Activated CD8-positive, alpha-beta T cell treated with anti-CD3 and anti-CD28 coated beads for 36 hours (primary cell): ENCODE measurements at regions of chr20 and their contacts with region 1.

Region 1: GRCh38 chr20:5788385-5788895 is 38.2 kb downstream of the SHLD1 start:
- DNase-seq: peak; percentile 88
- ATAC-seq: peak; percentile 98
- H3K4me3 Mint-ChIP-seq: no peak overlapping the region
- H3K27ac Mint-ChIP-seq: no peak overlapping the region
- H3K4me1 Mint-ChIP-seq: peaks cover 2% of the 10 kb centered on the region
- H3K27me3 Mint-ChIP-seq: no peaks in the 10 kb centered on the region
- CTCF ChIP-seq: peak; percentile 96

Region 2: GRCh38 chr20:5550733-5551529 is 237.5 kb before region 1 on chr20:
- CTCF ChIA-PET with region 1: interaction called, 71 read pairs
- POLR2A ChIA-PET with region 1: interaction called, 3 read pairs
- intact Hi-C with region 1: no loop called
- DNase-seq: no peak
- ATAC-seq: no peak
- H3K4me3 Mint-ChIP-seq: no peak overlapping the region
- H3K27ac Mint-ChIP-seq: peak overlapping the region; percentile 21
- H3K4me1 Mint-ChIP-seq: peaks cover 17% of the 10 kb centered on the region
- H3K27me3 Mint-ChIP-seq: no peaks in the 10 kb centered on the region
- CTCF ChIP-seq: no peak

Region 3: GRCh38 chr20:5557123-5557522 is 231.3 kb before region 1 on chr20:
- CTCF ChIA-PET with region 1: interaction called, 71 read pairs
- POLR2A ChIA-PET with region 1: no interaction called
- intact Hi-C with region 1: no loop called
- DNase-seq: peak; percentile 79
- ATAC-seq: peak; percentile 79
- H3K4me3 Mint-ChIP-seq: no peak overlapping the region
- H3K27ac Mint-ChIP-seq: peak overlapping the region; percentile 18
- H3K4me1 Mint-ChIP-seq: no peaks in the 10 kb centered on the region
- H3K27me3 Mint-ChIP-seq: no peaks in the 10 kb centered on the region
- CTCF ChIP-seq: peak; percentile 73

Region 4: DNA sequence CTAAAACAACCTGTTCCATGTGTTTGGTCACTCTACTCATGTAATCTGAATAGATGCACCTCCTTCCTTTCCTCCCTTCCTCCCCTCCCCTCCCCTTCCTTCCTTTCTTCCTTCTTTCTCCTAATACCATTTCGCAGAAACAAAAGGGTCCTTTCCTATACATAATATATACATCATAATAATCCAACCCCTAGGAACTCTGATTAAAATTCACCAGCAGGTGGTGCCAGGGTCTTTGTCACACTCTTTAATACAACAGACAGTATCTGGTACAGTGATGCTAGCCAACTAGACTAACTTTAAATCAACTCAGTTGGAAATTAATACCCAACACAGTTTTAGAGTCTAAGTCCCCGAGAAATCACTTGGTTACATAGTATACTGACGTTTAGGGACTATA is 219.4 kb before region 1 on chr20:
- CTCF ChIA-PET with region 1: interaction called, 104 read pairs
- POLR2A ChIA-PET with region 1: interaction called, 3 read pairs
- intact Hi-C with region 1: loop called (anchors 1 kb)
- DNase-seq: peak; percentile 74
- ATAC-seq: peak; percentile 93
- H3K4me3 Mint-ChIP-seq: no peak overlapping the region
- H3K27ac Mint-ChIP-seq: peak overlapping the region; percentile 84
- H3K4me1 Mint-ChIP-seq: peaks cover 20% of the 10 kb centered on the region
- H3K27me3 Mint-ChIP-seq: no peaks in the 10 kb centered on the region
- CTCF ChIP-seq: peak; percentile 67

Region 5: DNA sequence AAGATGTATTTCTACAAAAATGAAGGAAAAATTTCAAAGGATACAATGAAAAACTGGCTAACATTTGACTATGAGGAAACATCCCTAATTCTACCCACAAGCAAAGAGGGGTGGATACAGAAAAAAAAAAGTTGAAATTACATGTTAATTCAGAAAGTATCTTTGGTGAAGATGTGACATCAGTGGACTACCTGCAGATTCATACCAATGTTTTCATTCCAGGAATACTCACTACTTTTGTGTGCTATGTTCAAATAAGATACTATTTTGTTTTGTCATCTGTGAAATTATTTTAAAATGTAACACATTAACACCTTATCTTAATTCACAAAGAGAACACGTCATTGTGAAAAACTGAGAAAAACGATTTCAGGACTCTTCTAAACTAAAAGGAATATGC is 197.5 kb before region 1 on chr20:
- CTCF ChIA-PET with region 1: interaction called, 11 read pairs
- POLR2A ChIA-PET with region 1: no interaction called
- intact Hi-C with region 1: no loop called
- DNase-seq: no peak
- ATAC-seq: no peak
- H3K4me3 Mint-ChIP-seq: no peak overlapping the region
- H3K27ac Mint-ChIP-seq: peak overlapping the region; percentile 98
- H3K4me1 Mint-ChIP-seq: peaks cover 70% of the 10 kb centered on the region
- H3K27me3 Mint-ChIP-seq: no peaks in the 10 kb centered on the region
- CTCF ChIP-seq: no peak

Region 6: DNA sequence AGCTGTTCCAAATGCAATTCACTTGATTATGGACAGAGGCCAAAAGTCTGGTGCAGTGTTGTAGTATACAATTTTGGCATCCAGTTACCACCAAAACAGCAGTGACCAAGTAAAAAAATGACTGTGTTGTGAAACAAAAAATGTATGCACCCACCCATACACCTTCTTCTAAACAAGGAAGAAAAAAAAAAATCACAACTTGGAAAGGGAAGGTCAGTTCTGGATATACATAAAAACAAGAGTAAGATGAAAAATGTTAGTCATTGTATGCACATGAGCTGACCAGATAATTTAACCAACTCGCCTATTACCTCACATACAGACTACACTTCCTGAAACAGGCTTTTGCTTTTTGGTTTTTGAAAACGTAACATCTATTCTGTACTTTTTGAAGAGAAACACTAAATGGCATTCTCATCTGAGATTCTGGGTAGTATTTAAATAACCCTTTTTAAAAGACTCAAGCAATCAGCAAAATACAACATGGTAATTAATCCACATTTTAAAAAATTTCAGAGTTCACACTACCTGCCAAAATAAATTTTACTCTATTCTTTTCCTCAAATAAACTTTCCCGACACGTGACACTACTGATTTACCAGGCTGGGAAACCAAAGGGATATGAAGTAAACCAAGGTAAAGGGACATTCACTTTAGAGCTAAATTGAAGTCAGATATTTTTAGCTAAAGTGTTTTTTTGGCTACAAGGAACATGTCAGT is 179.8 kb before region 1 on chr20:
- CTCF ChIA-PET with region 1: interaction called, 10 read pairs
- POLR2A ChIA-PET with region 1: interaction called, 3 read pairs
- intact Hi-C with region 1: no loop called
- DNase-seq: no peak
- ATAC-seq: no peak
- H3K4me3 Mint-ChIP-seq: peak overlapping the region; percentile 96
- H3K27ac Mint-ChIP-seq: peak overlapping the region; percentile 99
- H3K4me1 Mint-ChIP-seq: peaks cover 51% of the 10 kb centered on the region
- H3K27me3 Mint-ChIP-seq: no peaks in the 10 kb centered on the region
- CTCF ChIP-seq: no peak

Region 7: GRCh38 chr20:5630071-5630470 is 158.4 kb before region 1 on chr20:
- CTCF ChIA-PET with region 1: no interaction called
- POLR2A ChIA-PET with region 1: no interaction called
- intact Hi-C with region 1: no loop called
- DNase-seq: no peak
- ATAC-seq: no peak
- H3K4me3 Mint-ChIP-seq: no peak overlapping the region
- H3K27ac Mint-ChIP-seq: no peak overlapping the region
- H3K4me1 Mint-ChIP-seq: no peaks in the 10 kb centered on the region
- H3K27me3 Mint-ChIP-seq: no peaks in the 10 kb centered on the region
- CTCF ChIP-seq: no peak

Region 8: GRCh38 chr20:5809495-5809894 is 21.1 kb after region 1 on chr20:
- CTCF ChIA-PET with region 1: interaction called, 11 read pairs
- POLR2A ChIA-PET with region 1: no interaction called
- intact Hi-C with region 1: no loop called
- DNase-seq: no peak
- ATAC-seq: no peak
- H3K4me3 Mint-ChIP-seq: no peak overlapping the region
- H3K27ac Mint-ChIP-seq: no peak overlapping the region
- H3K4me1 Mint-ChIP-seq: no peaks in the 10 kb centered on the region
- H3K27me3 Mint-ChIP-seq: no peaks in the 10 kb centered on the region
- CTCF ChIP-seq: no peak

Region 9: GRCh38 chr20:5884465-5885335 is 96.3 kb after region 1 on chr20:
- CTCF ChIA-PET with region 1: no interaction called
- POLR2A ChIA-PET with region 1: no interaction called
- intact Hi-C with region 1: no loop called
- DNase-seq: no peak
- ATAC-seq: no peak
- H3K4me3 Mint-ChIP-seq: no peak overlapping the region
- H3K27ac Mint-ChIP-seq: no peak overlapping the region
- H3K4me1 Mint-ChIP-seq: no peaks in the 10 kb centered on the region
- H3K27me3 Mint-ChIP-seq: peaks cover 10% of the 10 kb centered on the region
- CTCF ChIP-seq: no peak

Region 10: GRCh38 chr20:6295127-6295866 is 506.9 kb after region 1 on chr20:
- CTCF ChIA-PET with region 1: no interaction called
- POLR2A ChIA-PET with region 1: no interaction called
- intact Hi-C with region 1: no loop called
- DNase-seq: peak; percentile 5
- ATAC-seq: no peak
- H3K4me3 Mint-ChIP-seq: no peak overlapping the region
- H3K27ac Mint-ChIP-seq: no peak overlapping the region
- H3K4me1 Mint-ChIP-seq: no peaks in the 10 kb centered on the region
- H3K27me3 Mint-ChIP-seq: peaks cover 1% of the 10 kb centered on the region
- CTCF ChIP-seq: no peak